HEK293 (cell line): ENCODE measurements at regions of chr10 and their contacts with region 1.

Region 1: DNA sequence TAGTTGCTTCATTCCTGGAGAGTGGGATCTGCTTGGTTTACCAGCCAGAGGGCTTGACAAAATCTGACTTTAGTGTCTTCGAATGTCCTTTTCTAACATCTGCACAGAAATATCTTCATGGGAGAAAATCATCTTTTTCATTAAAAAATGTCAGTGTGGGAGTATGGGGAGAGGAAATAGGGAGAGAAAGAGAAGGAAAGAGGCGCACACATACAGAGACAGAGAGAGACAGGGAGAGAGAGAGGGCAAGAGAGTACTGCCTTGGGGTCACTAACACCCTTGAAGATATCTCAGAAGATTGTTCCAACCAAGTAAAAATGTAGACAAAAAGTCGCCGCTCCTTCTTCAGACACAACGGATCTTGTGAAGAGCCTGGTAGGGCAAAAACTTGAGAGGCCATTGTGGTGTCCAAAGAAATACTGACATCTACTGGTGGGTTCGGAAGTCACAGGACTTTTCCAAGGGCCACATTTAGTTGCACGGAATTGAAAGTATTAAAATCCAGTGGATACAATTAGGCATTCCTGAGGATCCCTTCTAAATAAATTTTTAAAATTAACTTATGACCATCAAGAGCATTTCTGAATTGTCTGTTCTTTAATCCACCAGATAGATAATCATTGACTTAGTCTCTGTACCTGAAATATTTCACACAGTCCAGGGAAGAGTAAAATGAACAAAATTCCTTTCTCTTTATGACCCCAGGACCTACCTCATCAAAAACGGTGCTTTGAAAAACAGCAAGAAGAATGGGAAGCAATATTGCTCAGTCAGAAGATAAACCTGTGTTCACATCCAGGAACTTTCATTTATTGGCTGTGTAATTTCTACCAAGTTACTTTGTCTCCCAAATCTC is 29.7 kb downstream of the VIM start:
- H3K4me3 ChIP-seq: no peak overlapping the region
- H3K27ac ChIP-seq: no peak overlapping the region
- H3K4me1 ChIP-seq: no peaks in the 10 kb centered on the region
- CTCF ChIP-seq: no peak; the same call in 1 of the 2 replicates

Region 2: GRCh38 chr10:16843252-16843870 is 414.3 kb before region 1 on chr10:
- CTCF ChIA-PET with region 1: interaction called, 18 read pairs
- POLR2A ChIA-PET with region 1: no interaction called
- H3K4me3 ChIP-seq: no peak overlapping the region
- H3K27ac ChIP-seq: no peak overlapping the region
- H3K4me1 ChIP-seq: no peaks in the 10 kb centered on the region
- CTCF ChIP-seq: no peak

Region 3: GRCh38 chr10:16986406-16987205 is 271.1 kb before region 1 on chr10:
- CTCF ChIA-PET with region 1: no interaction called
- POLR2A ChIA-PET with region 1: no interaction called
- H3K4me3 ChIP-seq: no peak overlapping the region
- H3K27ac ChIP-seq: no peak overlapping the region
- H3K4me1 ChIP-seq: no peaks in the 10 kb centered on the region
- CTCF ChIP-seq: no peak

Region 4: GRCh38 chr10:17010363-17011145 is 247.1 kb before region 1 on chr10:
- CTCF ChIA-PET with region 1: no interaction called
- POLR2A ChIA-PET with region 1: no interaction called
- H3K4me3 ChIP-seq: no peak overlapping the region
- H3K27ac ChIP-seq: no peak overlapping the region
- H3K4me1 ChIP-seq: peaks cover 7% of the 10 kb centered on the region; the same call in 1 of the 2 replicates
- CTCF ChIP-seq: no peak

Region 5: GRCh38 chr10:17238445-17239291 is 19.0 kb before region 1 on chr10:
- CTCF ChIA-PET with region 1: interaction called, 5 read pairs
- POLR2A ChIA-PET with region 1: interaction called, 13 read pairs
- H3K4me3 ChIP-seq: no peak overlapping the region
- H3K27ac ChIP-seq: no peak overlapping the region
- H3K4me1 ChIP-seq: no peaks in the 10 kb centered on the region
- CTCF ChIP-seq: no peak

Region 6: DNA sequence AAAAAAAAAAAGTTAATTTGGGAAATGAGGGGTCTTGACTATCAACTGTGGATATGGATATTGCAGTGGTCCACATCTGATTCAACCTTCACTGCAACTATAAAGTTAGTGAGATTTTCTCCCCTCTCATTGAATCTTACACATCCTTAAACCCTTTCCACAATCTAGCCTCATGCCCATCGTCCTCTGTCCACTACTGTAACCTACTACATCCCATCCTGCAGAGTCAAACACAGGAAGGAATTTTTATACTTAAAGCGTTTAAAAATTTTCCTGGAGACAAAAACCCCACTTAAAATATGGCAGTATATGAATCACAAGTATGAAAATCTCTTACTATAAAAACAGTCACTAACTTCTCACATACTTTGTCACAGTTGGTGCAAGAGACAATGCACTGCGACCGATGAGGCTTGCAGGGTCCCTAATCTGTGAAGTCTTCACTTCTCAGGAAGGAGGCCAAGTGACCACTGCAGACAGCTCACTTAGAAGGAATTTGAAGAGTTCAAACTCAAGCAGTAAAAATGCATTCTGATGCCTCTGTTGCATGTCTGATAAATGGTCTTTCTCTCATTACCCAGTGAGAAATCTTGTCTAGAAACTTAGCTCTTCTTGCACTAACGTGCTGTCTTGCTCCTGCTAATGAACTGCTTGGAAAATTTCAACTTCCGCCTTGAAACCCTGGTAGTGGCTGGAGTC is 247.0 kb after region 1 on chr10:
- CTCF ChIA-PET with region 1: no interaction called
- POLR2A ChIA-PET with region 1: no interaction called
- H3K4me3 ChIP-seq: no peak overlapping the region
- H3K27ac ChIP-seq: no peak overlapping the region
- H3K4me1 ChIP-seq: no peaks in the 10 kb centered on the region
- CTCF ChIP-seq: no peak